KBM-7 (cell line): ENCODE measurements at regions of chr13 and their contacts with region 1.

Region 1: GRCh38 chr13:24727731-24728601 is 36.0 kb upstream of the RNF17 start:
- DNase-seq: peak; percentile 88

Region 2: GRCh38 chr13:24038841-24039330 is 689.1 kb before region 1 on chr13:
- in situ Hi-C with region 1: no loop called
- DNase-seq: no peak

Region 3: GRCh38 chr13:24564881-24565280 is 163.1 kb before region 1 on chr13:
- in situ Hi-C with region 1: no loop called
- DNase-seq: no peak

Region 4: GRCh38 chr13:24995226-24995804 is 267.3 kb after region 1 on chr13:
- in situ Hi-C with region 1: loop called (anchors 25 kb)
- DNase-seq: peak; percentile 83

Region 5: GRCh38 chr13:25018729-25019115 is 290.8 kb after region 1 on chr13:
- in situ Hi-C with region 1: no loop called
- DNase-seq: no peak